Activated CD4-positive, alpha-beta T cell treated with anti-CD3 and anti-CD28 coated beads, Interleukin-2, amount 10 ng/mL, durations not matched to agents 24 days and 14 days (primary cell): ENCODE measurements at regions of chr5 and their contacts with region 1.

Region 1: GRCh38 chr5:160548949-160549665 is 127.5 kb downstream of the PTTG1 start:
- DNase-seq: no peak
- H3K4me3 Mint-ChIP-seq: no peak overlapping the region
- H3K27ac Mint-ChIP-seq: no peak overlapping the region
- H3K4me1 Mint-ChIP-seq: peaks cover 10% of the 10 kb centered on the region
- H3K27me3 Mint-ChIP-seq: no peaks in the 10 kb centered on the region

Region 2: DNA sequence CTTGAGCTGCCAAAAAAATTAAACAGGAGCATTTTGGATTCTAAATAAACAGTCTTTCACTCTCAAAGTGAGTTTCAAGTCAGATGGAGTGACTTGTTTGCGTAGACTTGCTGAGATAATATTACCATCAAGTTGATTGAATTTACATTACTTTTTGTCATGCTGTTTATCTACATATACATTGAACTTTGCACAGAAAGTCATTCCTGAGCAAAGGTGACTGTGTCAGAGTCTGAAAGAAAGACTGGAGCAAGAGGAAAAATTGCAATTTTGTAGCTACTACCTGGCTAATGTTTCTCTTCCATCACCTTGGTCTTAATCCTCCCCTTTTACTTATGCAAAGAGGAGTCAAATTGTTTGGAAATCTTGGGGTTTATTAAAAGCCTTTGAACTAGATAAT is 51.9 kb after region 1 on chr5:
- intact Hi-C with region 1: loop called (anchors 5 kb)
- DNase-seq: no peak
- H3K4me3 Mint-ChIP-seq: no peak overlapping the region
- H3K27ac Mint-ChIP-seq: no peak overlapping the region
- H3K4me1 Mint-ChIP-seq: no peaks in the 10 kb centered on the region
- H3K27me3 Mint-ChIP-seq: no peaks in the 10 kb centered on the region

Region 3: DNA sequence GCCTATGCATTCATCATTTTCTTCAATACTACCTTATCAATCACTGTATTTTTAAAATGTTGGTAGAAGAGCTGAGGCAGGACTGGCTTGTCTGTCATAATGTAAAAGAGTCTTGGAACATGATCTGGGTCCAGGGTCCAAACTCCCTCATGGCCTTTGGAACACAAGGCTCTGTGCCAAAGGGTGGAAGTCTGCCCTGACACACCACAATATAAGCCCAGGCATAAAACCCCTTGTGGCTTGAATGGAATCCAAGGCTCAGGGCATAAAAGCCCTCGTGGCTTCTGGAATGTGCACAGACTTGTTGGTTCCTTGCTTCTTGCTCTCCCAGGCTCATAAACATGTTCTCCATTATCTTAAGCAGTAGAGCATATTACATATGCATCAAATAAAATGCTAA is 949.4 kb after region 1 on chr5:
- intact Hi-C with region 1: no loop called
- DNase-seq: no peak
- H3K4me3 Mint-ChIP-seq: no peak overlapping the region
- H3K27ac Mint-ChIP-seq: no peak overlapping the region
- H3K4me1 Mint-ChIP-seq: no peaks in the 10 kb centered on the region
- H3K27me3 Mint-ChIP-seq: no peaks in the 10 kb centered on the region